Left cardiac atrium (tissue), 4 donors: ENCODE measurements at regions of chr20 and their contacts with region 1.

Region 1: DNA sequence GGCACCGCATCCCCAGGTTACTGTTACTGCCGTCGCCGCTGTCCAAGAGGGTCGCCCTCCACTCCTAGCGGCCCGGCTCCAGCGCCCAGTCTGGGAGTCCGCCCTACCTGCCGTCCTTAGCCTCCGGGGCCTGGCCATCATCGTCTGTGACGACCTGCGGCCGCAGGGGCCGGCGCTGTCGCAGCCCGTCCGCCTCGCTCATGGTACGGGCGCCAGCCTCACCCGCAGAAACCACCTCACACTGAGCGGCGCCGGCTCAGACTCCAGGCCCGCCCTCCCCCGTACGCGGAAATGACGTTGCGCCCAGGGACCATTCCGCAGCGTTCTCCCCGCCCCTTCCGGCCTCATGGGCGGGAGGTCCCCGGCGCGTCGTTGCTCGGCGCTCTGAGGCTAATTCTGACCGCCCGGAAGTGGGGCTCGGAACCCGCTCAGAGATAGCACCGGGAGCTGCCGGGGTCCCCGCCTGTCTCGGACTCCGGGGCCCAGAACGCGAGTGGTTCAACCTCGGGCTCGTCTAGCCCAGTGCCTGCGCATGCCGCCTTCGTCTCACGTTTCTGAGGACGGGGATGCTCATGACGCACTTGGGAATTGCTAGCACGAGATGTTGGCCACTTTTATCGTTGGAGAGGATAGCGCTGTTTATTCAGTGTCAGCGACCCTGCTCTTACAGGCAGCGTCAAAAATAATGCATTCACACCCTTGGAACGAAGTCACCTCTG is at the start of gene APMAP:
- DNase-seq: peak; percentile 98
- ATAC-seq: peak; percentile 94 to 97
- total RNA-seq, gene APMAP: 47.0 to 52.2 TPM

Region 2: DNA sequence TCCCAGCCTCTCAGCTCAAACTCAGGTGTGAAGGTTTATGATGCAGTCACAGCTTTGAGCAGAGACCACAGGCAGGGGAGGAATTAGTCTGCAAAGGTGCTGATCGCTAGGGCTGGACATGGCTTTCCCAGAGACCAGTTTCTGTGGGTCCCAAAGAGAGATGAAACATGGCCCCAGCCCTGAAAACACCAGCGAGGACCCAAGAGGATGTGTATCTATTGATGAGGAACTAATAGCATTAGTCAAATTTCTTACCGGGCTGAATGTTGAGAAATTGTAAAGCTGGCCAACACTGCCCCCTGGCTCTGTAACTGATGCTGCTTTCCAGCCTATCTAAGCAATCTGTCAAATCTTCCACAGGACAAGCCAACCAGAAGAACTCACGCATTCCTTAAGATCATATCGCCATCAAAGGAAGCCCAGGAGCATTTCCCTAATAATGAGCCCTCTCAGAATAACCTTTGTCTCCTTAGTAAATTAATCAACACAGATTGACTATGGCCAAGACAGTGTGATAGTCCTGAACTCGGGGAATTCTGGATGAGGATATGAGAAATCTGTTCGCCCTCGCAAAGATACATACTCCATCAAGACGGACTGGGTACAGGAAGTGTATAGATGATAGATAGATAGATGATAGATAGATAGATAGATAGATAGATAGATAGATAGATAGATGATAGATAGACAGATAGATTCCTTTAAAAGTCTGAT is 73.1 kb after region 1 on chr20:
- intact Hi-C with region 1: loop called (anchors 1 to 2 kb)
- DNase-seq: peak; percentile 55
- ATAC-seq: peak; percentile 77 to 88

Region 3: GRCh38 chr20:25178563-25179438 is 186.2 kb after region 1 on chr20:
- intact Hi-C with region 1: loop called in 1 of 2 experiments (anchors 5 kb)
- DNase-seq: peak; percentile 33
- ATAC-seq: peak; percentile 86 to 95

Region 4: GRCh38 chr20:25195014-25195961 is 202.6 kb after region 1 on chr20 and contains the start of gene ENTPD6:
- intact Hi-C with region 1: loop called (anchors 5 to 10 kb)
- DNase-seq: peak; percentile 94
- ATAC-seq: peak; percentile 91 to 93
- total RNA-seq, gene ENTPD6: 110 to 127 TPM

Region 5: GRCh38 chr20:25254986-25255680 is 262.5 kb after region 1 on chr20:
- intact Hi-C with region 1: loop called in 1 of 2 experiments (anchors 10 kb)
- DNase-seq: peak; percentile 63
- ATAC-seq: peak; percentile 84 to 90

Region 6: DNA sequence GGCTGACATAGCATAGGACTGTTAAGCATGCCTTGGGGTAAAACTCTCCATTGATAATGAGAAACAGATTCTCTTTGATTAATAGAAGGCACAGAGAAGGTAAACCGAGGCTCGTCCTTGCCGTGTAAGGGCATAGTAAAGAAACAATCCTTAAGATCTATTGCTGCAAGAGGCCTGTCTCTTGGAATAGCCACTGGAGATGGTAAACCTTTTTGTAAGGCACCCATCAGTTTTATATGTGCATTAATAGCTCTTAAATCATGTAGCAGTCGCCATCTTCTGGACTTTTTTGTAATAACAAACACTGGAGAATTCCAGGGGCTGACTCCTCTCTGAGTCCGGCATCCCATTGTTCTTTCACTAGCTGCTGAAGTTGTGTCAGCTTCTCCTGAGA is 406.4 kb after region 1 on chr20:
- intact Hi-C with region 1: loop called in 1 of 2 experiments (anchors 2 kb)
- DNase-seq: no peak
- ATAC-seq: peak; percentile 83 to 84